ENCODE measurements at regions of chr1 and their contacts with region 1.

Region 1: DNA sequence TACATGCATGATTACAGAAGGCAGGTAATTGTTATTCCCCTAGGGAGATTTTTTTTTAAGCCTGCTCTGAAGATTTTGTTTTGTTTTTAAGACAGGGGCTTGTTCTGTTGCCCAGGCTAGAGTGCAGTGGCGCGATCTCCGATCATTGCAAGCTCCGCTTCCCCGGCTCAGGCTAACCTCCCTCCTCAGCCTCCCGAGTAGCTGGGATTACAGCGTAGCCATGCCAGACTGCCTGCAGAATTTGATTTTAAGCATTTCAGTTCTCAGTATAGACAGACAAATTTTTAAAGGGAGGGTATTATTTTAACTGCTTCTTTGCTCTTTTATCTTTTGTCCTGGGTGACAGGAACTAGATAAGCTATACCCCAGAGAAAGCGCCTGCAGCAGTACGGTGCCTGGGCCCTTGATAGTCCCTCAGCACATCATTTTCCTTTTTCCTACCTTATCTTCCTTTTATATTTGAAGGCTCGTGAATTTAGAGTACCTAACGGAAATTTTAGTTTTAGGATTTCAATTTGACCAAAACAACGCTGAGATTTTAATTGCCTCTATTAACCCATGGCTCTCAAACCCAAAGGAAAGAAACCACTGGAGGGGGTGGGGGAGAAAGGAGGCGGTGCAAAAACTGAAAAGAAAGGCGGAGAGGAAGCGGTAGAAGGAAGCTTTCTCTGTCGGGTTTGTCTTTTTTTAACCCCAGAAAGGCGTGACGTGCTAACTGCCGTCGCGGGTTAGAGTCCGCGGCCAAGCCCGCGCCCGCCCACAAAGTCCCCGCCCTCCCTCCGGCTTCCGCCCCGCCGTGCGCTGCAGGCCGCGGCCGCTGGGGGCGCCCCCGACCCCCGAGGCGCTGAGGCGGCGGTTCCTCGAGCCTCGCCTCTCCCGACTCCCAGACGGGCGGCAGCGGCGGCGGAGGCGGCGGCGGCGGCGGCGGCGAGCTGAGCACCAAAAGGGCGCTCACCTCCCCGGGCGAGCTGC is at the start of gene EEIG2:
- DNase-seq: peak; percentile 86 to 95 (median 89)
- ATAC-seq: peak; percentile 92
- H3K4me3 ChIP-seq: peak within 1 kb of the TSS; percentile 56 to 72
- H3K4me3 Mint-ChIP-seq: peak within 1 kb of the TSS; percentile 94
- H3K27ac ChIP-seq: peak within 1 kb of the TSS; percentile 41 to 69
- H3K27ac Mint-ChIP-seq: peak within 1 kb of the TSS; percentile 93
- H3K4me1 ChIP-seq: peaks cover 27% of the 10 kb centered on the region
- H3K4me1 Mint-ChIP-seq: peaks cover 45% of the 10 kb centered on the region
- H3K27me3 ChIP-seq: no peaks in the 10 kb centered on the region
- H3K27me3 Mint-ChIP-seq: no peaks in the 10 kb centered on the region
- CTCF ChIP-seq: peak; percentile 69
- total RNA-seq, gene EEIG2: 11.0 to 11.5 TPM

Region 2: DNA sequence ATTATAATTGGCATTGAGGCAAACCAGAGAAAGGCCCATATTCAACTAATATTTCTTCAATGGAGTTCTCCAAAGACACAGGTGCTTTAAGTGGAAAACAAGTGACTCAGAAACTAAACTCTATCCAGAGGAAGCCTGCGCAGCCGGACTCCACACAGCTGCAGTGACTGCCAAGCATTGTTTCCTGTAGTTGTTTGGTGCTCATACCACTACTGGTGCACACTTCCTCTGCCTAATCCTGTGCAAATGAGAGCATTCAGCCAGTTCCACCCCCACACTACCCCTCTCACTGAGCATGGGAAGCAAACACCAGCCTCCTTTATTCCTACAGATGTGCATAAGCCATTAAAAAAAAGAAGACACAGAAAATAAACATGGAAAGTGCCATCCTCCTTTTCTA is 697.4 kb before region 1 on chr1:
- CTCF ChIA-PET with region 1: no interaction called
- POLR2A ChIA-PET with region 1: no interaction called
- intact Hi-C with region 1: no loop called
- DNase-seq: no peak
- ATAC-seq: no peak
- H3K4me3 ChIP-seq: no peak overlapping the region
- H3K4me3 Mint-ChIP-seq: no peak overlapping the region
- H3K27ac ChIP-seq: no peak overlapping the region
- H3K27ac Mint-ChIP-seq: peak overlapping the region; percentile 65
- H3K4me1 ChIP-seq: peaks cover 17% of the 10 kb centered on the region
- H3K4me1 Mint-ChIP-seq: peaks cover 36% of the 10 kb centered on the region
- H3K27me3 ChIP-seq: no peaks in the 10 kb centered on the region
- H3K27me3 Mint-ChIP-seq: no peaks in the 10 kb centered on the region
- CTCF ChIP-seq: no peak

Region 3: DNA sequence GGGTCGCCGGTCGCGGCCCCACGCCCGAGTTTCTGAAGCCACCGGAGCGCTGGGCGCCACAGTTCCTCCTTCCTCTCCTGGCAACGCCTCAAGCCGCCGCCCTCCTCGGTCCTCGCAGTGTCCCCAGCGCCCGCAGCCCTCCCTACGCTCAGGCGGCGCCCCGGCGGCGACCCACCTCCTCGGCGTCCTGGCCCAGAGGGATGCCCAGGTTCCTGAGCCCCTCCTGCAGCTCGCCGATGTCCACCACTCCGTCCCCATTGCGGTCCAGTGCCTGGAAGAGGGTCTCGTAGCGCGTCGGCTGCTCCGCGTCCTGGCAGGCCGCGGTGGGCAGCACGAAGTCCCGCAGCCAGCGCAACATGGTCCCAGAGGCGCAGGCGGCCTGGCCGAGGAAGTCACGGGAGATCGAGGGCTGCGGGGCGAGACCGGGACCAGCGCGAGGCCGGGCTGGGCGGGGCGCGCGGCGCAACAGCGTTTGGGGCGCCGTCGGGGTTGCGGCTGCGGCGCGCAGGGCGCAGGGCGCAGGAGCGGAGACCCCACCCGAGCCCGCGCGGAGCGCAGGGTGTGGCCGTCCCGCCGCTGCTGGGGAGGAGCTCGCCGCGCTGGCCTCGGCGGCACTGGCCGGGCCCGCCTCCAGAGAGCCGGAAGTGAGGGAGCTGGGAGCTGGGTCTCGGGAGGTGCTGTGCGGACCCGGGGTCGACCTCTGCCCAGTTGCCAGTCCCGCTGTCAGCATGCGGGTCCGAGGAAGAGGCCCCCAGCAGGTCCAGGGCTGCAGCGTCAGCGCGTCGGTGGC is 359.5 kb before region 1 on chr1 and contains the start of gene SLC25A24:
- CTCF ChIA-PET with region 1: interaction called, 9 read pairs
- POLR2A ChIA-PET with region 1: interaction called, 5 read pairs
- intact Hi-C with region 1: loop called (anchors 5 kb)
- DNase-seq: peak; percentile 34 to 85 (median 72)
- ATAC-seq: peak; percentile 94
- H3K4me3 ChIP-seq: peak within 1 kb of the TSS; percentile 75 to 98
- H3K4me3 Mint-ChIP-seq: peak within 1 kb of the TSS; percentile 88
- H3K27ac ChIP-seq: peak within 1 kb of the TSS; percentile 70 to 72
- H3K27ac Mint-ChIP-seq: peak within 1 kb of the TSS; percentile 87
- H3K4me1 ChIP-seq: peaks cover 12% of the 10 kb centered on the region
- H3K4me1 Mint-ChIP-seq: peaks cover 31% of the 10 kb centered on the region
- H3K27me3 ChIP-seq: no peaks in the 10 kb centered on the region
- H3K27me3 Mint-ChIP-seq: no peaks in the 10 kb centered on the region
- CTCF ChIP-seq: no peak
- total RNA-seq, gene SLC25A24: 3.3 to 4.3 TPM

Region 4: DNA sequence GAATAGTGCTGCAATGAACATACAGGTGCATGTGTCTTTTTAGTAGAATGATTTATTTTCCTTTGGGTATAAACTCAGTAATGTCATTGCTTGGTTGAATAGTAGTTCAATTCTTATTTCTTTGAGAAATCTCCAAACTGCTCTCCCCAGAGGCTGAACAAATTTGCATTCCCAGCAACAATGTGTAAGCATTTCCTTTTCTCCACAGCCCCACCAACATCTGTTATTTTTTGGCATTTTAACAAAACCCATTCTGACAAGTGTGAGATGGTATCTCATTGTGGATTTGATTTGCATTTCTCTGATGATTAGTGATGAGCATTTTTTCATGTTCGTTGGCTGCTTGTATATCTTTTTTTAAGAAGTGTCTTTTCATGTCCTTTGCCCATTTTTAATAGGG is 21.5 kb before region 1 on chr1:
- CTCF ChIA-PET with region 1: interaction called, 11 read pairs
- POLR2A ChIA-PET with region 1: no interaction called
- intact Hi-C with region 1: no loop called
- DNase-seq: no peak
- ATAC-seq: no peak
- H3K4me3 ChIP-seq: no peak overlapping the region
- H3K4me3 Mint-ChIP-seq: no peak overlapping the region
- H3K27ac ChIP-seq: no peak overlapping the region
- H3K27ac Mint-ChIP-seq: no peak overlapping the region
- H3K4me1 ChIP-seq: no peaks in the 10 kb centered on the region
- H3K4me1 Mint-ChIP-seq: no peaks in the 10 kb centered on the region
- H3K27me3 ChIP-seq: no peaks in the 10 kb centered on the region
- H3K27me3 Mint-ChIP-seq: peaks cover 13% of the 10 kb centered on the region
- CTCF ChIP-seq: no peak

Region 5: DNA sequence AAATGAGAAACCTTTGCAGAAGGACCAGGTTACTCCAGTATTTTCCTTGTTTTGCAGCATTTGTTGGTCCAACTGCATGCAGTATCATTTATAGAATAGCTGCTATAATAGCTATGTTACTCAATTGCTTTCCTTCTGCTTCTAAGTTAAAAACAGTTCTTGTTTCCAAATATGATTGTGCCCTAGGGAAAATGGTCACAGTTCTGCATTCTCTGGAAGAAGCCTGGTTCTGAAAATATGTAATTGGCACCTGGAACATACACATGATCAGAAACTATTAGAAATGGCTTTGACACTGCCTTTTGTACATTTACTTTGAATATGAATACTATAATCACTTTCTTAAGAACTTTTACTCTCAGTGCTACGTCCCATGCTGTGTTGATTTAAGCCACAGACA is 67.8 kb after region 1 on chr1:
- CTCF ChIA-PET with region 1: interaction called, 10 read pairs
- POLR2A ChIA-PET with region 1: no interaction called
- intact Hi-C with region 1: no loop called
- DNase-seq: no peak
- ATAC-seq: no peak
- H3K4me3 ChIP-seq: no peak overlapping the region
- H3K4me3 Mint-ChIP-seq: no peak overlapping the region
- H3K27ac ChIP-seq: no peak overlapping the region
- H3K27ac Mint-ChIP-seq: no peak overlapping the region
- H3K4me1 ChIP-seq: no peaks in the 10 kb centered on the region
- H3K4me1 Mint-ChIP-seq: no peaks in the 10 kb centered on the region
- H3K27me3 ChIP-seq: no peaks in the 10 kb centered on the region
- H3K27me3 Mint-ChIP-seq: no peaks in the 10 kb centered on the region
- CTCF ChIP-seq: no peak

Region 6: GRCh38 chr1:108708691-108709660 is 149.5 kb after region 1 on chr1:
- CTCF ChIA-PET with region 1: interaction called, 6 read pairs
- POLR2A ChIA-PET with region 1: interaction called, 4 read pairs
- intact Hi-C with region 1: loop called in 1 of 2 experiments (anchors 5 kb)
- DNase-seq: peak; percentile 44 to 83 (median 71)
- ATAC-seq: peak; percentile 83
- H3K4me3 ChIP-seq: no peak overlapping the region
- H3K4me3 Mint-ChIP-seq: no peak overlapping the region
- H3K27ac ChIP-seq: no peak overlapping the region
- H3K27ac Mint-ChIP-seq: no peak overlapping the region
- H3K4me1 ChIP-seq: peaks cover 16% of the 10 kb centered on the region
- H3K4me1 Mint-ChIP-seq: peaks cover 30% of the 10 kb centered on the region
- H3K27me3 ChIP-seq: no peaks in the 10 kb centered on the region
- H3K27me3 Mint-ChIP-seq: no peaks in the 10 kb centered on the region
- CTCF ChIP-seq: peak; percentile 57

Region 7: DNA sequence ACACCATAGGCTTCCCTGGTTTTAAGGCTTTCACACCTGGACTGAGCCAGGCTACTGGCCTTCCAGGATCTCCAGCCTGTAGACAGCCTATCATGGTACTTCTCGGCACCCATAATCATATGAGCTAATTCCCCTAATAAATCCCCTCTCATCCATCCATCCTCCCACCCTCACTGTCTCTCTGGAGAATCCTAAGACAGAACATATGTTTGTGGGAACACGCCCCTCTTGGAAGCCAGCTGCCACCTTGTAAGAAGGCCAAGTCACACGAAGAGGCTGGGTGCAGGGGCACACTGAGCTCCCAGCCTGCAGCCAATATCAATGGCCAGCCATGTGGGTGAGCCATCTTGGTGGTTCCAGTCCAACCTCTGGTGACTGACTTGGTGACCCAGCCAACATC is 396.4 kb after region 1 on chr1:
- CTCF ChIA-PET with region 1: no interaction called
- POLR2A ChIA-PET with region 1: no interaction called
- intact Hi-C with region 1: loop called in 1 of 2 experiments (anchors 2 kb)
- DNase-seq: peak in 1 of 9 experiments; percentile 30
- ATAC-seq: no peak
- H3K4me3 ChIP-seq: no peak overlapping the region
- H3K4me3 Mint-ChIP-seq: no peak overlapping the region
- H3K27ac ChIP-seq: no peak overlapping the region
- H3K27ac Mint-ChIP-seq: no peak overlapping the region
- H3K4me1 ChIP-seq: peaks cover 21% of the 10 kb centered on the region
- H3K4me1 Mint-ChIP-seq: peaks cover 49% of the 10 kb centered on the region
- H3K27me3 ChIP-seq: no peaks in the 10 kb centered on the region
- H3K27me3 Mint-ChIP-seq: no peaks in the 10 kb centered on the region
- CTCF ChIP-seq: no peak

Measured in CD8-positive, alpha-beta T cell (primary cell).